ENCODE measurements at regions of chr5 and their contacts with region 1.

Region 1: GRCh38 chr5:170420780-170421412 is 31.7 kb upstream of the KCNMB1 start:
- DNase-seq: peak; percentile 36
- H3K4me3 ChIP-seq: no peak overlapping the region
- H3K27ac ChIP-seq: no peak overlapping the region
- H3K27me3 ChIP-seq: peaks cover 12% of the 10 kb centered on the region
- CTCF ChIP-seq: peak; percentile 72

Region 2: GRCh38 chr5:170225326-170226128 is 195.4 kb before region 1 on chr5:
- CTCF ChIA-PET with region 1: interaction called, 54 read pairs
- POLR2A ChIA-PET with region 1: no interaction called
- DNase-seq: no peak
- H3K4me3 ChIP-seq: no peak overlapping the region
- H3K27ac ChIP-seq: no peak overlapping the region
- H3K27me3 ChIP-seq: no peaks in the 10 kb centered on the region
- CTCF ChIP-seq: peak; percentile 71

Region 3: GRCh38 chr5:170267431-170268152 is 153.3 kb before region 1 on chr5:
- CTCF ChIA-PET with region 1: interaction called, 33 read pairs
- POLR2A ChIA-PET with region 1: no interaction called
- DNase-seq: peak; percentile 27
- H3K4me3 ChIP-seq: no peak overlapping the region
- H3K27ac ChIP-seq: no peak overlapping the region
- H3K27me3 ChIP-seq: peaks cover 14% of the 10 kb centered on the region
- CTCF ChIP-seq: peak; percentile 83

Region 4: DNA sequence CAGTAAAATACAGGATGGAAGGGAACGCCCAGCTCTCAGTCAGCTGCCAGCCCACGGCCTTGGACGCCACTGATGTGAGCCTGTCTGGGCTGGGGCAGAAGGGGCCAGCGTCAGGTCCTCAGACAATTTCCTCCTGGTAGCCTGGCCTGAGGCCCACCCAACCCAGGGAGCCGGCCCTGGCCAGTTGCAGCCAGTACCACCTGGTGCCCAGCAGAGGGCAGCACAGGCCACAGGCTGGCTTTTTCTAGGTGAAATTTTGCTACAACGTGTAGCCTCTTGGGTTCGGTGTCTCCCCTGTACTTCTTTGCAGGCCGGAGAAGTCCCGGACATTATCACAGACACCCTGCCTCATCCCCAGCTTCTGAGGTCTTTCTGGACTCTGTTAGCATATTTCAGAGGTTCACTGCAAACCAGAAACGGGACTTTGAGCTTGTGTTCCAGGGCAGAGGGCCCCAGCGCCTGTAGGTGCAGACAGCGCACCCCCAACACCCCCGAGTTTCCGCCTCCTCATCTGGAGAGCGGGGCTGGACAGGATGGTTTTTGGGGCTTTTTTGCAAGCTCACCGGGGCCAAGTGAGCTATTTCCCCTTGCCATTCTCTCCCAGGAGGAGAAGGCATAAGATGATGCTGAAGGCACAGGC is 14.2 kb after region 1 on chr5:
- CTCF ChIA-PET with region 1: interaction called, 18 read pairs
- POLR2A ChIA-PET with region 1: no interaction called
- DNase-seq: peak; percentile 23
- H3K4me3 ChIP-seq: no peak overlapping the region
- H3K27ac ChIP-seq: no peak overlapping the region
- H3K27me3 ChIP-seq: peaks cover 15% of the 10 kb centered on the region
- CTCF ChIP-seq: peak; percentile 98

Measured in AG04450 (cell line).